Gastrocnemius medialis (tissue), 4 donors: ENCODE measurements at regions of chr16 and their contacts with region 1.

Region 1: DNA sequence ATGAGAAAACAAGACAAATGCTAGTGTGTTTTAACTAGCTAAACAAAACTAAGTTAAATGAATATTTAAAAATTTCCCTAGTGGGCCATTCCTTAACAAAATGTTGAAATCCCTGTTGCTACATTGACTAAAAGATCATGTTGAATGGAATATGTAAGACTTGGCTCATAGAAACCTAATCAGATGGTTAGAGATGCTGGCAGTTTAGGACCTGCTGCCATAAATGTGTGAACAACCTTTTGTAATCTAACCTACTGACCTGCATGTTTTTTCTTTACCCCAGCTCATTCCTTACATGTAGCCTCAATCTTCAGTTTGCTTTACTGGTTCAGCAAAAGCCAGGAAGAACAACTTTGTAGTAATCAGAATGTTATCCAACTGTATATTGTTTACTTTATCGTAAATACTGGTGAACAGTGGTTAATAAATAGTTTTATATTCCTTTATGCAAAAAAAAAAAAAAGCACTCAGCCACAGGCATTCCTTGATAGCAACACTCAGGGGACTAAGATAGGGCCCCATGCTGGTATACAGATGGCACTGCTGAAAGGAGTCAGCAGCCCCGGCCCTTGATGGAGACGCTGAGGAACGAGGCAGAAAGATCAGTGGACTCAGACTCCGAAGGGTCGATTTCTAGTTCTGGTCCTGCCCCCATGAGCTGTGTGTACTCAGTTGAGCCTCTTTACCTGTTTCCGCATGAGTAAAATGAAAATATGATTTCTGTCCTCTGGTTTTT is 78.2 kb downstream of the MARF1 start:
- DNase-seq: no peak
- ATAC-seq: peak in 1 of 2 donors; percentile 13
- H3K4me3 ChIP-seq: no peak overlapping the region
- H3K27ac ChIP-seq: peak overlapping the region; percentile 85 to 92 (median 90)
- H3K4me1 ChIP-seq: peaks cover 28 to 41% of the 10 kb centered on the region in 2 donors
- H3K27me3 ChIP-seq: no peaks in the 10 kb centered on the region
- CTCF ChIP-seq: no peak
- POLR2A ChIP-seq: no peak

Region 2: GRCh38 chr16:15404792-15405191 is 160.0 kb before region 1 on chr16:
- in situ Hi-C with region 1: no loop called
- intact Hi-C with region 1: loop called (anchors 2 kb)
- DNase-seq: peak; percentile 92 to 94
- ATAC-seq: peak; percentile 92 to 94
- H3K4me3 ChIP-seq: no peak overlapping the region
- H3K27ac ChIP-seq: peak overlapping the region; percentile 95 to 97 (median 96)
- H3K4me1 ChIP-seq: peaks cover 17 to 34% of the 10 kb centered on the region in 2 donors
- H3K27me3 ChIP-seq: no peaks in the 10 kb centered on the region
- CTCF ChIP-seq: no peak
- POLR2A ChIP-seq: no peak

Region 3: GRCh38 chr16:15518390-15519351 is 46.1 kb before region 1 on chr16:
- in situ Hi-C with region 1: no loop called
- intact Hi-C with region 1: loop called (anchors 2 kb)
- DNase-seq: peak; percentile 49 to 77
- ATAC-seq: peak; percentile 65 to 74
- H3K4me3 ChIP-seq: no peak overlapping the region
- H3K27ac ChIP-seq: peak overlapping the region; percentile 60 to 82 (median 77)
- H3K4me1 ChIP-seq: peaks cover 32% of the 10 kb centered on the region in 2 donors
- H3K27me3 ChIP-seq: no peaks in the 10 kb centered on the region
- CTCF ChIP-seq: no peak
- POLR2A ChIP-seq: no peak

Region 4: DNA sequence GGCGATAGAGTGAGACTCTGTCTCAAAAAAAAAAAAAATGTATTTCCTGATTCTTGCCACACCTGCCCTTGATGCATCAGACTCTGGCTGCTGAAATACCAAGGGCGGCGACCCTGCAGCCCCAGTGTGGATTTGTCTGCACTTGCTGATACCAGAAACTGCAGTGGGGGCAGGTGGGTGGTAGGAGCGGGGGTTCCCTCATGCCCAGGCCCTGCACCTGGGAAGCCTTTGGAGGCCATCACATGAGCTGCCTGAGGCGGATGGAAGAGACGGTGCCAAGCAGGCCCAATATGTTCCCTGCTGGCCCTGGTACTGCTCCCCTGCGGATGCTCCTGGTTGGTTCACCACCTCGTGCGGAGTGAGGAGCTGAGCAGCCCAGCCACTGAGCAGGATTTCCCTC is 27.6 kb after region 1 on chr16:
- in situ Hi-C with region 1: no loop called
- intact Hi-C with region 1: loop called (anchors 2 kb)
- DNase-seq: no peak
- ATAC-seq: no peak
- H3K4me3 ChIP-seq: no peak overlapping the region
- H3K27ac ChIP-seq: peak overlapping the region; percentile 7 to 58 (median 39)
- H3K4me1 ChIP-seq: peaks cover 9 to 18% of the 10 kb centered on the region in 2 donors
- H3K27me3 ChIP-seq: no peaks in the 10 kb centered on the region
- CTCF ChIP-seq: no peak
- POLR2A ChIP-seq: no peak

Region 5: DNA sequence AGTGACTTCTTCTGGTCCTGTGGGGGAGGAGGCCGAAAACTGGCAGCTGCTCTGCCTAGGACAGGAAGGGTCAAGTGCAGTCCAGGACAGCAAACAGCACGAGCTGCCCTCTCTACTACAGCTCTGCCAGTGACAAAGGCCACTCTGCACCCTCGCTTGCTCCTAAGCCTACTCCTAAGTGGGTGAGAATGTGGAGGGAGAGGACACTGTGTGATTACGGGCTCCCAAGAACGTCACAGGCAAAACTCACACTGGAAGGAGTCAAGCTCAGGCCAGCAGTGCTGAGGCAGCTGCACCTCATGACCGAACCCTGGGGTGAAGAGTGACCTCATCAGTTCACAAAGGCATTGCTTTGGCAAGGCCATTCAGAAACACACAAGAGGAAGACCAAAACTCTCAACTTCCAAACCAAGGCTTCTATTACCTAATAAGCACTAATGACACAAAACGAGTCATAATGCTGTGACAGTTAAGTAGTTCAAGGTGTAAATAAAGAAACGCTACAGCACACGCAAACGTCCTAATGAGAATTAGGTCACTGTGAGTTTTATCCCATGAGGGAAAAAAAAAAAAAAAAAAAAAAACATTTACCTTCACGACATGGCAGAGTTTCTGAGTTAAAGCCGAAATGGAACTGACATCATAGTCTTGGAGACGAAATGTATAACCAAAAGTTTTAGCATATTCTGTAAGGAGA is 43.1 kb after region 1 on chr16:
- in situ Hi-C with region 1: loop called in 1 of 4 experiments (anchors 5 kb)
- intact Hi-C with region 1: loop called (anchors 1 kb)
- DNase-seq: peak; percentile 94 to 97
- ATAC-seq: peak; percentile 87 to 91
- H3K4me3 ChIP-seq: no peak overlapping the region
- H3K27ac ChIP-seq: peak overlapping the region; percentile 81 to 92 (median 89)
- H3K4me1 ChIP-seq: peaks cover 53% of the 10 kb centered on the region in 2 donors
- H3K27me3 ChIP-seq: no peaks in the 10 kb centered on the region
- CTCF ChIP-seq: no peak
- POLR2A ChIP-seq: peak; percentile 40 to 67

Region 6: GRCh38 chr16:15643048-15643945 is 78.5 kb after region 1 on chr16 and contains the start of gene MARF1:
- in situ Hi-C with region 1: no loop called
- intact Hi-C with region 1: loop called (anchors 5 kb)
- DNase-seq: peak; percentile 97
- ATAC-seq: peak; percentile 86 to 92
- H3K4me3 ChIP-seq: peak within 1 kb of the TSS; percentile 83 to 98 (median 96)
- H3K27ac ChIP-seq: peak within 1 kb of the TSS; percentile 97 to 100 (median 99)
- H3K4me1 ChIP-seq: peaks cover 24% of the 10 kb centered on the region in 2 donors
- H3K27me3 ChIP-seq: no peaks in the 10 kb centered on the region
- CTCF ChIP-seq: peak; percentile 28 to 61 (median 46)
- POLR2A ChIP-seq: peak; percentile 98
- total RNA-seq, gene MARF1: 19.5 to 29.8 (median 26.5) TPM